ENCODE measurements at regions of chr2 and their contacts with region 1.

Region 1: GRCh38 chr2:59150217-59150849 is 909.2 kb upstream of the FANCL start:
- DNase-seq: no peak
- H3K4me3 ChIP-seq: no peak overlapping the region
- H3K27ac ChIP-seq: no peak overlapping the region
- H3K4me1 ChIP-seq: no peaks in the 10 kb centered on the region
- H3K27me3 ChIP-seq: no peaks in the 10 kb centered on the region
- CTCF ChIP-seq: no peak
- POLR2A ChIP-seq: no peak

Region 2: GRCh38 chr2:58973831-58974281 is 176.5 kb before region 1 on chr2:
- intact Hi-C with region 1: loop called (anchors 10 kb)
- DNase-seq: no peak
- H3K4me3 ChIP-seq: no peak overlapping the region
- H3K27ac ChIP-seq: no peak overlapping the region
- H3K4me1 ChIP-seq: peaks cover 0 to 3% of the 10 kb centered on the region in 2 donors
- H3K27me3 ChIP-seq: no peaks in the 10 kb centered on the region
- CTCF ChIP-seq: no peak
- POLR2A ChIP-seq: no peak

Region 3: DNA sequence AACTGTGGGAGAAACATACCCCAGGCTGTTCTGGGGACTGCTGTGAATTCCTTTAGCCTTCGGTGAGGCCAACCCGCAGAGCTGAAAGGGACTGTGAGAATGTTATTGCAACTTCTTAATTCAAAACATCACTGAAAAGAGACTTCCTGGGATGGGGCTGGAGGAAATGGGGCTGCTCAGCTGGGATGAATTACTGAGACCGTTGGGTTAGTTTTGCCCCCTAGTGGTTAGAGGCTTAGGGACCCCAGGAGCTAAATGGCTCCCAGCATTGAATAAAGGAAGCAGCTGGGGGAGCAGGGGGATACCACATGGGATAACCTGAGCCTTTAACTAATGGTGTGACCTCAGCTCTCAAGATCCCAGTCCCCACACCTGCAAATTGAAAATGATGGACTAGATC is 31.9 kb after region 1 on chr2:
- intact Hi-C with region 1: loop called (anchors 2 kb)
- DNase-seq: no peak
- H3K4me3 ChIP-seq: no peak overlapping the region
- H3K27ac ChIP-seq: no peak overlapping the region
- H3K4me1 ChIP-seq: no peaks in the 10 kb centered on the region
- H3K27me3 ChIP-seq: no peaks in the 10 kb centered on the region
- CTCF ChIP-seq: no peak
- POLR2A ChIP-seq: no peak

Region 4: GRCh38 chr2:59568461-59568860 is 418.1 kb after region 1 on chr2:
- intact Hi-C with region 1: no loop called
- DNase-seq: no peak
- H3K4me3 ChIP-seq: no peak overlapping the region
- H3K27ac ChIP-seq: no peak overlapping the region
- H3K4me1 ChIP-seq: no peaks in the 10 kb centered on the region
- H3K27me3 ChIP-seq: no peaks in the 10 kb centered on the region
- CTCF ChIP-seq: no peak
- POLR2A ChIP-seq: no peak

Measured in breast epithelium (tissue), 4 donors.